Dorsolateral prefrontal cortex (tissue), 120 donors: ENCODE measurements at regions of chr16 and their contacts with region 1.

Region 1: DNA sequence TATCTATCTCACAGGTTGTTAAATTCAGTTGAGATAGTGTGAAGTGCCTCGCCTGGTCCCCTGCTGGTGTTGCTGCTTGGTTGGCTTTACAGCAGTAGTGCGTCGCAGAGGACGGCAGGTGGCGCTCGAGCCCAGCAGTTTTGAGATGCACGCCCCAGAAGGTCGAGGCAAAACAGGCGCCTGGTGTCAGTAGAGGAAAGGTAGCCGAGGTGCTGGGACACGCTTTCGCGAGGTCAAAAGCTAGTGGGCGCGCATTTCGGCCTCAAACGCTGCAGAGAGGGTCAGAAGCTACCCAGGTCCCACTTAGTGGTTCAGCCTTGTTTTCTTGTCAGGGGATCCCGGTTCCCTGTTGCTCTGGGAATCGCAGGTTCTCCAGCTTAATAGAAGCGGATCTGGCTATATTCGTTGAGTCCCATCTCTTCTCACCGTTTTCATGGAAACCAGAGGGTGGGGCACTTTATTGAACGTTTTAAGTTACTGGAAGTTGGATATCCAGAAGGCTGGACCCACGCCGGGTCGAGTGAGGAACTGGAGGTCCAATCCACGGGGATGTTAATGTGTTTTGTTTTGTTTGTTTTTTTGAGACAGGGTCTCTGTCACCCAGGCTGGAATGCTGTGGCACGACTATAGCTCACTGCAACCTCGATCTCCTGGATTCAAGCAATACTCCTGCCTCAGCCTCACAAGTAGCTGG is 10.3 kb upstream of the ZFP90 start:
- DNase-seq: peak; percentile 80 to 91 (median 87)
- H3K4me3 ChIP-seq: peak overlapping the region in 55 of 59 donors; percentile 12 to 98 (median 45)
- H3K27ac ChIP-seq: peak overlapping the region in 8 of 59 donors; percentile 14 to 75 (median 46)
- H3K27me3 ChIP-seq: no peaks in the 10 kb centered on the region
- CTCF ChIP-seq: peak; percentile 69 to 99 (median 96)

Region 2: GRCh38 chr16:68448360-68448970 is 80.4 kb before region 1 on chr16 and contains the start of gene SMPD3:
- intact Hi-C with region 1: loop called in 1 of 2 experiments (anchors 5 kb)
- DNase-seq: peak; percentile 98 to 100 (median 100)
- H3K4me3 ChIP-seq: peak within 1 kb of the TSS; percentile 47 to 95 (median 75)
- H3K27ac ChIP-seq: peak within 1 kb of the TSS in 46 of 59 donors; percentile 22 to 76 (median 60)
- H3K27me3 ChIP-seq: peaks cover 0 to 19% (median 0%) of the 10 kb centered on the region in 45 donors
- CTCF ChIP-seq: peak in 40 of 56 donors; percentile 6 to 68 (median 38)
- total RNA-seq, gene SMPD3: 5.3 to 40.7 (median 21.2) TPM

Region 3: GRCh38 chr16:68800257-68800875 is 271.5 kb after region 1 on chr16:
- intact Hi-C with region 1: loop called in 1 of 2 experiments (anchors 5 kb)
- DNase-seq: peak in 8 of 10 donors; percentile 13 to 73 (median 50)
- H3K4me3 ChIP-seq: no peak overlapping the region
- H3K27ac ChIP-seq: peak overlapping the region in 34 of 59 donors; percentile 13 to 81 (median 51)
- H3K27me3 ChIP-seq: no peaks in the 10 kb centered on the region
- CTCF ChIP-seq: peak; percentile 25 to 92 (median 72)

Region 4: GRCh38 chr16:68843482-68844210 is 314.8 kb after region 1 on chr16 and contains the start of gene TANGO6:
- intact Hi-C with region 1: loop called (anchors 2 to 10 kb)
- DNase-seq: peak; percentile 73 to 91 (median 86)
- H3K4me3 ChIP-seq: peak within 1 kb of the TSS; percentile 62 to 98 (median 90)
- H3K27ac ChIP-seq: peak within 1 kb of the TSS; percentile 45 to 97 (median 89)
- H3K27me3 ChIP-seq: no peaks in the 10 kb centered on the region
- CTCF ChIP-seq: peak in 35 of 56 donors; percentile 4 to 57 (median 23)
- total RNA-seq, gene TANGO6: 22.2 to 62.8 (median 36.2) TPM

Region 5: DNA sequence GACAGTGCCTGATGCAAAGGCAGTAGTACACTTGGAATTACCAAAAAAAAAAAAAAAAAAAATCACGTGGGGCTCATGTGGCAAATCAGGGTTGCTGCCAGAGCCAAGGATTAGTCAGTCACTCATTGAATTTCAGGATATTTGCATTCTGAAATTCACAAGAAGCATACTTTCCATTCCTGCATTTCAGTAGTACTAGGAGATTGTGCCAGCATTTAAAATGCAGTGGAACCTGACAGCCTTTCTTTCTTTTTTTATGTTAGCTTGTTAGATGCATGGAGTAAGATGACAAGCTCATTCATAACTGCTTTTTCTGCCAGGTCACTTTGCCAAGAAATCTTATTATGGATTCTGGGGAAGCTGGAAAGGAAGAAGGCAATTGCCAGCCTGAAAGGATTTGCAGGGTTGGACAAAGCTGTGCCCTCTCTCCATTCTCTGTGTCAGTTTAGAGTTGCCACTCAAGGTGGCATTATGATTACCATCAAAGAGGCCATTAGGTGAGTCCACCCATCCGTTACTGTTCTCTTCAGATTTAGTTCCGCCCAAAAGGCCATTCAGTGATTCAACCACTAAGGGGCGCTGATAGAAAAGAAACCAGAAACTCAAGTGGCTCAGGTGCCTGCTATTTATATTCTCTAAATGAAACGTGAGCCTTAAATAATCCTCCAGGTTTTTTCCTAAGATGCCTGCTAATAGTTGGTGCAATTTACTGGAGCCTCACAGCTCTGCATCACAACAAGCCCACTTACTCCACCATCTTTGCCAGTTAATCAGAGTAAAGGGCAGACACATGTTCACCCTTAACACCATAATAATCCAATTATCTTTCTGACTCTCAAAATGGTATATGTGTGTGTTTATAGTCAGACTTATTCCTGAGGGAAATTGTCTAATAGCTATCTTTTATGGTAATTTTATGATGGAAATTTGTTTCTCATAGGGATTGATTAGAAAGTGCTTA is 373.5 kb after region 1 on chr16:
- intact Hi-C with region 1: loop called in 1 of 2 experiments (anchors 10 kb)
- DNase-seq: peak in 4 of 10 donors; percentile 5 to 44 (median 29)
- H3K4me3 ChIP-seq: no peak overlapping the region
- H3K27ac ChIP-seq: peak overlapping the region in 42 of 59 donors; percentile 5 to 79 (median 53)
- H3K27me3 ChIP-seq: no peaks in the 10 kb centered on the region
- CTCF ChIP-seq: peak; percentile 52 to 84 (median 74)